ENCODE measurements at regions of chr6 and their contacts with region 1.

Region 1: DNA sequence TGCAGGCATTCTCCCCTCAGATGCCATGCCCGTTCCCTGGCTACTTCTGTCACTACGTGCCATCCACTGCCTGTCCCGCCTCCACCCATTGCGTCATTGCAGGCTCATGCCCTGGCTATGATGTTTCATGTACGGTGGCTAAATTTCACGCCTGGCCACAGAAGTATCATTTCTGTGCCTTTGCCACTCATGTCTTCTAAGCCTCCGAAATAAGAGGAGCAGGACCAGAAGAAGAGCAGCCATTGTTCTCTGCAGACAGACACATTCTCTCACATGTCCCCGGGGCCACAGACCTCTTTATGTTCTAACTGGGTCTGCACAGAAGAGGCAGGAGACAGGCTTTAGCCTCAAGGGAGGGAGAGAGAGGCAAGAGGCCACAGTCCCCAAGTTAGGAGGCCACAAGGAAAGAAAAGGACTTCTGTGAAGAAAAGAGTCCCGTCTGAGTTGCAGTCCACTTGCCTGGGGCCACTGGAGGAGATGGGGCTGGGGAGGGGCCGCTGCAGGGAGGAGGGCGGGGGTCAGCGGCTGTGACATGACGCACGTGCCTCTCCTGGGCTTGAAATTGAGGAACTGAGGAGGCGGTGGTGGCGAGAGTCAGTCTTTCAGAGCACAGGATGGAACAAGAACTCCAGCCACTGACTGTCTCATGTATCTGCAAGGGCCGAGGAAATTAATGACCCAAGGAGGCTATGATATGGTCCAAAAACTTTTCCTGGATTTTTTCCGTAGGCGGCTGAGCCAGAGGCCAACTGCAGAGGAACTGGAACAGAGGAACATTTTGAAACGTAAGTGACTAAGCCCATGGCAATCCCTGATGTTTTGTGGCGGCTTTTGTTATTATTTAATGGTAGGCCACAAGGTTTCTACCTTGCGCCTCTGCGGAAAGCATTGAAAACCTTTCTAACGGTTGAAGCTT is 55.9 kb downstream of the TBC1D7 start:
- DNase-seq: peak; percentile 54 to 85 (median 64)
- ATAC-seq: peak; percentile 51
- H3K4me3 ChIP-seq: peak overlapping the region; percentile 47
- H3K27ac ChIP-seq: peak overlapping the region; percentile 92
- H3K4me1 ChIP-seq: peaks cover 25 to 39% of the 10 kb centered on the region in 2 experiments
- H3K27me3 ChIP-seq: no peaks in the 10 kb centered on the region
- CTCF ChIP-seq: no peak
- EP300 ChIP-seq: no peak; the same call in 1 of the 2 replicates
- POLR2A ChIP-seq: peak; percentile 60; the same call in 1 of the 2 replicates
- RAD21 ChIP-seq: peak; percentile 10 to 36; a peak in 1 of 4 replicates

Region 2: GRCh38 chr6:13194852-13195251 is 77.5 kb before region 1 on chr6:
- CTCF ChIA-PET with region 1: no interaction called
- POLR2A ChIA-PET with region 1: no interaction called
- in situ Hi-C with region 1: no loop called
- intact Hi-C with region 1: loop called (anchors 2 kb)
- DNase-seq: peak; percentile 58 to 84 (median 70)
- ATAC-seq: peak; percentile 90
- H3K4me3 ChIP-seq: no peak overlapping the region
- H3K27ac ChIP-seq: no peak overlapping the region
- H3K4me1 ChIP-seq: no peaks in the 10 kb centered on the region
- H3K27me3 ChIP-seq: peaks cover 12 to 17% of the 10 kb centered on the region in 2 experiments
- CTCF ChIP-seq: peak; percentile 83 to 90 (median 83)
- EP300 ChIP-seq: no peak
- POLR2A ChIP-seq: no peak
- RAD21 ChIP-seq: peak; percentile 86 to 89

Region 3: GRCh38 chr6:13259393-13259792 is 13.0 kb before region 1 on chr6:
- CTCF ChIA-PET with region 1: no interaction called
- POLR2A ChIA-PET with region 1: interaction called, 33 read pairs
- in situ Hi-C with region 1: no loop called
- intact Hi-C with region 1: no loop called
- DNase-seq: no peak
- ATAC-seq: no peak
- H3K4me3 ChIP-seq: no peak overlapping the region
- H3K27ac ChIP-seq: no peak overlapping the region
- H3K4me1 ChIP-seq: peaks cover 0 to 7% of the 10 kb centered on the region in 2 experiments; a peak in 4 of 5 replicates
- H3K27me3 ChIP-seq: no peaks in the 10 kb centered on the region
- CTCF ChIP-seq: no peak
- EP300 ChIP-seq: no peak
- POLR2A ChIP-seq: no peak
- RAD21 ChIP-seq: no peak

Region 4: DNA sequence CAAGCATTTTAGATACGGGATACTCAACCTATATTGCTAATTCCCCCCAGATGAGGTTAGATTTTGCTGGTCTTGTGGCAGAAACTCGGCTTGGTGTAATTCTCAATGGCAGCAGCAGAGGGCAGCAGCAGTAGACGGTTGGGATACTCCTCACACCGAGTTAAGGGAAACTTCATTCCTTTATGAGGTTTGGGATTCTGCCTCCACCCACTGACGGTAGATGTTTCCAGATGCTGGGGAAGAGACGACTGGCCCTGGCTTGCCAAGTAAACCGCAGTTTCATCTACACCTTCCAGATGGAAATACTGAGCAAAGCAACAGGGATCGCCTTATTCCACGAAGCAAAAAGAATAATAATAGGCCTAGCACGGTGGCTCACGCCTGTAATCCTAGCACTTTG is 64.2 kb after region 1 on chr6:
- CTCF ChIA-PET with region 1: no interaction called
- POLR2A ChIA-PET with region 1: no interaction called
- in situ Hi-C with region 1: no loop called
- intact Hi-C with region 1: no loop called
- DNase-seq: peak; percentile 79 to 84 (median 82)
- ATAC-seq: peak; percentile 89
- H3K4me3 ChIP-seq: no peak overlapping the region
- H3K27ac ChIP-seq: no peak overlapping the region
- H3K4me1 ChIP-seq: peaks cover 9% of the 10 kb centered on the region in 2 experiments
- H3K27me3 ChIP-seq: peaks cover 0 to 3% of the 10 kb centered on the region in 2 experiments; a peak in 2 of 5 replicates
- CTCF ChIP-seq: peak; percentile 92 to 94 (median 94)
- EP300 ChIP-seq: 0 out of 2 replicates have a peak, but pooled peaks have one; percentile 4
- POLR2A ChIP-seq: no peak
- RAD21 ChIP-seq: peak; percentile 86 to 87